GM12878 (cell line): ENCODE measurements at regions of chr15 and their contacts with region 1.

Region 1: DNA sequence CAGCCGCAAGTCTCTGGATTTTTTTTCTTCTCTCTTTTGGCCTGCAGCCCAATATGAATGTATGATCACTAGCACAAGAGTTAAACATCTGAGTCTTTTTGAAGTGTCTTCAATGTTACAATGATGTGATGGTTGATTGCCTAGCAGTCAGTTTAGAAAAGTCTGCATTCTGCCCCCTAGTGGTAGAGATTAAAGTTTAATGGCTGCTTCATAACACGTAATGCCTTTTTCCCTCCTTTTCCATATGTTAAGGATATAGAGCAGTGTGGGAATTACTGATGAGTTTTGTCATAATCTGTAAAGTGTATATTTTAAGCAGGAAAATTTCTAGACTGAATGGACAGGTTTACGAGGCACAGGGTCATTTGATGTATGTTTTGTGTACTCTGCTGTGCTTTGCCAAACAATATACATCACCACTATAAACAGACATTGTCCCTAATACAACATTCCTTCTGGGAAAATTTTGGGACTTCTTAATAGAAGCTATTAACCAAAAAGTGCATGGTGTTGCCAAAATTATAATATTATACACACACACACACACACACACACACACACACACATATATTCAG is 1038.5 kb upstream of the NR2F2 start:
- DNase-seq: no peak
- ATAC-seq: peak; percentile 38; the same call in 2 of the 3 replicates
- H3K4me3 ChIP-seq: no peak overlapping the region
- H3K27ac ChIP-seq: no peak overlapping the region
- H3K4me1 ChIP-seq: peaks cover 4% of the 10 kb centered on the region; the same call in 1 of the 2 replicates
- H3K27me3 ChIP-seq: no peaks in the 10 kb centered on the region
- CTCF ChIP-seq: peak; percentile 43 to 51 (median 44)
- EP300 ChIP-seq: no peak
- POLR2A ChIP-seq: no peak
- RAD21 ChIP-seq: peak; percentile 50

Region 2: GRCh38 chr15:95252404-95252803 is 39.6 kb before region 1 on chr15:
- CTCF ChIA-PET with region 1: no interaction called
- POLR2A ChIA-PET with region 1: no interaction called
- RAD21 ChIA-PET with region 1: no interaction called
- SMC1A ChIA-PET with region 1: no interaction called
- in situ Hi-C with region 1: no loop called
- intact Hi-C with region 1: no loop called
- DNase-seq: no peak
- ATAC-seq: no peak
- H3K4me3 ChIP-seq: no peak overlapping the region
- H3K27ac ChIP-seq: no peak overlapping the region
- H3K4me1 ChIP-seq: no peaks in the 10 kb centered on the region
- H3K27me3 ChIP-seq: no peaks in the 10 kb centered on the region
- CTCF ChIP-seq: no peak
- EP300 ChIP-seq: no peak
- POLR2A ChIP-seq: no peak
- RAD21 ChIP-seq: no peak

Region 3: DNA sequence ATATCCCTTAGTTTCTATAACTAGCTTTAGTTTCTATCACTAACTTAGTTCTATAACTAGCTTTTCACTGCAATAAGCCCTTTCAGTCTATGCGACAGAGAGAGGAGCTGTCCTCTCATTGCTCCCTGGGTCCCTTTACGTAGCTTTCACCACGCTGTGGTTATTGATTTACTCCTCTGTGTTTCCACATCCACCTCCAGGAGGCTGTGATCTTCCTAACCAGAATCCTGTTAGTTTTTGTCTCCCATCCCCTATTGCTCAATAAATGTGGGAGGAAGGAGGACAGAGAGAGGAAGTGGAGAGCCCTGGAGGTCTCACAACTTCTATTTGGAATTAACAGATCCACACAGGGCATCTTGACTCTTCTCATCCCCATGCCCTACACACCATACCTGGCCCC is 24.5 kb before region 1 on chr15:
- CTCF ChIA-PET with region 1: interaction called, 92 read pairs
- POLR2A ChIA-PET with region 1: interaction called, 10 read pairs
- RAD21 ChIA-PET with region 1: interaction called, 104 read pairs
- SMC1A ChIA-PET with region 1: interaction called, 310 read pairs
- in situ Hi-C with region 1: no loop called
- intact Hi-C with region 1: no loop called
- DNase-seq: no peak
- ATAC-seq: no peak
- H3K4me3 ChIP-seq: no peak overlapping the region
- H3K27ac ChIP-seq: no peak overlapping the region
- H3K4me1 ChIP-seq: no peaks in the 10 kb centered on the region
- H3K27me3 ChIP-seq: no peaks in the 10 kb centered on the region
- CTCF ChIP-seq: no peak
- EP300 ChIP-seq: no peak
- POLR2A ChIP-seq: no peak
- RAD21 ChIP-seq: no peak

Region 4: GRCh38 chr15:95277266-95277665 is 14.7 kb before region 1 on chr15:
- CTCF ChIA-PET with region 1: interaction called, 72 read pairs
- POLR2A ChIA-PET with region 1: interaction called, 6 read pairs
- RAD21 ChIA-PET with region 1: interaction called, 5 read pairs
- SMC1A ChIA-PET with region 1: interaction called, 25 read pairs
- in situ Hi-C with region 1: no loop called
- intact Hi-C with region 1: no loop called
- DNase-seq: no peak
- ATAC-seq: no peak
- H3K4me3 ChIP-seq: no peak overlapping the region
- H3K27ac ChIP-seq: no peak overlapping the region
- H3K4me1 ChIP-seq: no peaks in the 10 kb centered on the region
- H3K27me3 ChIP-seq: no peaks in the 10 kb centered on the region
- CTCF ChIP-seq: no peak
- EP300 ChIP-seq: no peak
- POLR2A ChIP-seq: no peak
- RAD21 ChIP-seq: no peak

Region 5: DNA sequence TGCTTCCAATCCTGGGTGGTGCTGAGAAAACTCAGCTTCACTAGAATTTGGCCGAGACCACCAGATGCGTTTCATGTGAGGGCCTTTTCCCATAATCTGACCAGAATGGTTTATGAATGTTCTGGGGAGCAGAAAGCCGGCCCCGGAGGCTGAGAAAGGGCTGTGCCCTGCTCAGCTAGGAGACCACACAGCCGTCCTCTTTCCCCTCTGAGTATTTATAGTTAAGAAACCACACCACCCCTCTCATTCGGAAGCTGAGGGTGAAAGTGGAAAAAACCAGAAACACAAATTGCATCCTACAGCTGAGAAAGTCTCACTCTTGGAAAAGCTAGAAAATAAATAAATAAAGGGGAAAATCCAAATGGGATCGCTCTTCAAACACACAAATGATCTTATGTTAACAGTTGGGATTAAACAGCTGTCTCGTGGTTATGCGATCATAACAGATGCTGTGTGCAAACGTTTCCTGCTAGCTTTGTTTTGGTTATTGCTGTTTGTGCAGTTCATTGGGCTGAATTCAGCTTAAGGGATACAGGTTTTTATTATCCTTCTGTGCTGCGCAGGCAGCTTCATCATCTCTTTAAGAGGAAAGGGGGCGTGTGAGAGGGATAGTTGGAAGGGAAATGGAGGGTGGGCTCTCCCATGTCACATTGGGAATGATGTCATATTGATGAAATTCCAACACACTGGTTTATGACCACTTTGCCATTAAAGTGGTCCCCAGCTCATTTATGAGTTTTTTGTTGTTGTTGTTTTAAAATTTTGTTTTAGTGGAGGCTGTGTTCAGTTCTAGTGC is 12.4 kb after region 1 on chr15:
- CTCF ChIA-PET with region 1: interaction called, 14 read pairs
- POLR2A ChIA-PET with region 1: interaction called, 12 read pairs
- RAD21 ChIA-PET with region 1: interaction called, 12 read pairs
- SMC1A ChIA-PET with region 1: interaction called, 44 read pairs
- in situ Hi-C with region 1: no loop called
- intact Hi-C with region 1: no loop called
- DNase-seq: no peak
- ATAC-seq: peak; percentile 67
- H3K4me3 ChIP-seq: no peak overlapping the region
- H3K27ac ChIP-seq: no peak overlapping the region
- H3K4me1 ChIP-seq: no peaks in the 10 kb centered on the region
- H3K27me3 ChIP-seq: no peaks in the 10 kb centered on the region
- CTCF ChIP-seq: no peak
- EP300 ChIP-seq: no peak
- POLR2A ChIP-seq: no peak
- RAD21 ChIP-seq: no peak